ENCODE measurements at regions of chr2 and their contacts with region 1.

Region 1: GRCh38 chr2:237904801-237905599 is 45.6 kb downstream of the RAMP1 start:
- DNase-seq: peak; percentile 64 to 98
- H3K4me3 ChIP-seq: no peak overlapping the region
- H3K27ac ChIP-seq: peak overlapping the region; percentile 96 to 99
- H3K4me1 ChIP-seq: peaks cover 11 to 46% of the 10 kb centered on the region in 2 donors
- H3K27me3 ChIP-seq: no peaks in the 10 kb centered on the region
- CTCF ChIP-seq: no peak

Region 2: DNA sequence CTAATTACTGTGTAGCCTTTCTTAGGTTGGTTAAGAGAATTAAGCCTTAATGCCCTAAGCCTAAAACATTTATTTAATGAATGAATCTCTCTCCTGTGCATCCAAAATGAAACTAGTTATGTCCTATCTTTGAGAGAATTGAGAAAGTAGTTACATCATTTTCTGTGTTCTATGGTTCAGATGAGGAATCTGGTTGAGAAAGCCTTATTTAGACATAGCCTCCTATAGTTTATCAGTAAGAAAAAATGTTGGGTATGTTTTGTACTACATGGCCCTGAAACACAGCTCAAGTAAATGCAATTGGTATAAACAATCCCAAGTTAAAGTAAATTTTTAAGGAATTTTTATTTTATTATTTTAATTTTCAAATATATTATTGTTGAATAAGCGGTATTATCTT is 71.5 kb before region 1 on chr2:
- intact Hi-C with region 1: no loop called
- DNase-seq: no peak
- H3K4me3 ChIP-seq: no peak overlapping the region
- H3K27ac ChIP-seq: no peak overlapping the region
- H3K4me1 ChIP-seq: no peaks in the 10 kb centered on the region
- H3K27me3 ChIP-seq: no peaks in the 10 kb centered on the region
- CTCF ChIP-seq: no peak

Region 3: GRCh38 chr2:237864940-237865622 is 39.9 kb before region 1 on chr2:
- intact Hi-C with region 1: loop called (anchors 1 kb)
- DNase-seq: peak in 1 of 2 donors; percentile 83
- H3K4me3 ChIP-seq: peak overlapping the region in 1 of 2 donors; percentile 26
- H3K27ac ChIP-seq: peak overlapping the region; percentile 97 to 98
- H3K4me1 ChIP-seq: peaks cover 10 to 69% of the 10 kb centered on the region in 2 donors
- H3K27me3 ChIP-seq: no peaks in the 10 kb centered on the region
- CTCF ChIP-seq: no peak

Region 4: GRCh38 chr2:237886685-237887481 is 18.1 kb before region 1 on chr2:
- intact Hi-C with region 1: loop called (anchors 1 kb)
- DNase-seq: peak in 1 of 2 donors; percentile 94
- H3K4me3 ChIP-seq: no peak overlapping the region
- H3K27ac ChIP-seq: peak overlapping the region; percentile 96 to 99
- H3K4me1 ChIP-seq: peaks cover 11 to 49% of the 10 kb centered on the region in 2 donors
- H3K27me3 ChIP-seq: no peaks in the 10 kb centered on the region
- CTCF ChIP-seq: no peak